Motor neuron (in vitro differentiated cells): ENCODE measurements at regions of chr4 and their contacts with region 1.

Region 1: DNA sequence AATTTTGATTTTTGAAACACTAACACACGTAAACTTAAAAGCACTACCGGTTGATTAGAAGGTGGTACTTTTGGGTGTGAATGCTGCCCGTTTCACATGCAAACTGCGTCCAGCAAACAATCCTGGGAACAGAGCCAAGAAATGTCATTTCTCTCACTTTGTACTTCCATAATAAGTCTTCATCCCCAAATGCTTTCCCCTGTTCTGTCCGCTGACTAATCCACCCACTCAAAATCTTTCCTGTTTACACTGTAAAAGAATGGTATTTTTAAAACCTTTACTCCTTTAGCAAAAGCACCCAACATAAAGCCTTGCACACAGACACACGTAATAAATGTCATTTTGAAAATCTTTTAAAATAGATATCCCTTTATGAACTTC is 39.1 kb upstream of the PDLIM5 start:
- ATAC-seq: peak in 3 of 8 experiments; percentile 14 to 40 (median 23)
- H3K4me3 ChIP-seq: no peak overlapping the region
- H3K27ac ChIP-seq: no peak overlapping the region
- H3K4me1 ChIP-seq: peaks cover 0 to 3% of the 10 kb centered on the region in 2 donors

Region 2: GRCh38 chr4:93501946-93502345 is 910.7 kb before region 1 on chr4:
- in situ Hi-C with region 1: no loop called
- ATAC-seq: no peak
- H3K4me3 ChIP-seq: no peak overlapping the region
- H3K27ac ChIP-seq: no peak overlapping the region
- H3K4me1 ChIP-seq: peaks cover 0 to 6% of the 10 kb centered on the region in 2 donors

Region 3: GRCh38 chr4:94208266-94208665 is 204.4 kb before region 1 on chr4:
- in situ Hi-C with region 1: no loop called
- ATAC-seq: no peak
- H3K4me3 ChIP-seq: peak overlapping the region; percentile 54 to 95 (median 65)
- H3K27ac ChIP-seq: peak overlapping the region; percentile 93 to 96
- H3K4me1 ChIP-seq: peaks cover 0 to 11% of the 10 kb centered on the region in 2 donors

Region 4: GRCh38 chr4:94583914-94584641 is 171.4 kb after region 1 on chr4:
- in situ Hi-C with region 1: loop called in 5 of 9 experiments (anchors 10 to 25 kb)
- ATAC-seq: peak in 1 of 8 experiments; percentile 74
- H3K4me3 ChIP-seq: no peak overlapping the region
- H3K27ac ChIP-seq: no peak overlapping the region
- H3K4me1 ChIP-seq: no peaks in the 10 kb centered on the region